Prostate gland (tissue), 2 donors: ENCODE measurements at regions of chr1 and their contacts with region 1.

Region 1: DNA sequence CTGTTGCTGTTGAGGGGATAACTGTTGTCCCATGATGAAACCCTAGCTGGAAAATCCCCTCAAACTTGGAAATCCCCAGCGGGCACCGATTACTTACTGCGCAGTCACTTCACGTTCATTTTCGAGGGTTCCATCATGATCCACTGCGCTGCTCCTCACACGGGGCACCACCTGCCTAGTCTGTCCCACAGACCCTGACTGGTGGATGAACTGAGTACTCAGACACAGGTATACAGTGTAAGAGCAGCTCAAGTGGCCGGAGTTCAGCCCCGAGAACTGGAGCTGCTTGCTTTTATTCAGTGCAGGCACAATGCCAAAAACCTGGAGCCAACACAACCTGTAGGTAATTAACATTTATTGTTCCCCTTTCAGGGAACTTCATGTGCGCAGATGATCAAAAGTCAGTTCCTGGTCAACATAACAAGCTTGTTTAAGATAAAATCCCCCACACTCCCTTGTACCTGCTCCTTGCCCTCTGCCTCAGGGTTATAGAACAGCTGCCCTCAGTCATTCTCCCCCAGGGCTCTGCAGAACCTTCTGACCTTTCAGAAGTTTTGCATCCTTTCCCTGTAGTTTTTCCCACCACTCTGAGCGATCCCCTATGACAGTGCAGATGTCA is 46.5 kb upstream of the PRELP start:
- DNase-seq: peak; percentile 45
- H3K4me3 ChIP-seq: no peak overlapping the region
- H3K27ac ChIP-seq: peak overlapping the region in 1 of 2 donors; percentile 51
- H3K4me1 ChIP-seq: peaks cover 8% of the 10 kb centered on the region
- H3K27me3 ChIP-seq: no peaks in the 10 kb centered on the region
- CTCF ChIP-seq: no peak
- POLR2A ChIP-seq: no peak

Region 2: GRCh38 chr1:203381151-203381751 is 47.8 kb before region 1 on chr1:
- intact Hi-C with region 1: loop called (anchors 5 kb)
- DNase-seq: no peak
- H3K4me3 ChIP-seq: no peak overlapping the region
- H3K27ac ChIP-seq: peak overlapping the region in 1 of 2 donors; percentile 46
- H3K4me1 ChIP-seq: no peaks in the 10 kb centered on the region
- H3K27me3 ChIP-seq: no peaks in the 10 kb centered on the region
- CTCF ChIP-seq: no peak
- POLR2A ChIP-seq: no peak

Region 3: GRCh38 chr1:204145033-204145504 is 716.0 kb after region 1 on chr1:
- intact Hi-C with region 1: no loop called
- DNase-seq: no peak
- H3K4me3 ChIP-seq: no peak overlapping the region
- H3K27ac ChIP-seq: no peak overlapping the region
- H3K4me1 ChIP-seq: no peaks in the 10 kb centered on the region
- H3K27me3 ChIP-seq: no peaks in the 10 kb centered on the region
- CTCF ChIP-seq: no peak
- POLR2A ChIP-seq: no peak